Gastrocnemius medialis (tissue), 4 donors: ENCODE measurements at regions of chr3 and their contacts with region 1.

Region 1: GRCh38 chr3:54374214-54374855 is 252.0 kb downstream of the CACNA2D3 start:
- DNase-seq: no peak
- ATAC-seq: peak in 1 of 2 donors; percentile 41
- H3K4me3 ChIP-seq: no peak overlapping the region
- H3K27ac ChIP-seq: no peak overlapping the region
- H3K4me1 ChIP-seq: peaks cover 0 to 4% of the 10 kb centered on the region in 2 donors
- H3K27me3 ChIP-seq: no peaks in the 10 kb centered on the region
- CTCF ChIP-seq: peak; percentile 26 to 50 (median 39)
- POLR2A ChIP-seq: no peak

Region 2: DNA sequence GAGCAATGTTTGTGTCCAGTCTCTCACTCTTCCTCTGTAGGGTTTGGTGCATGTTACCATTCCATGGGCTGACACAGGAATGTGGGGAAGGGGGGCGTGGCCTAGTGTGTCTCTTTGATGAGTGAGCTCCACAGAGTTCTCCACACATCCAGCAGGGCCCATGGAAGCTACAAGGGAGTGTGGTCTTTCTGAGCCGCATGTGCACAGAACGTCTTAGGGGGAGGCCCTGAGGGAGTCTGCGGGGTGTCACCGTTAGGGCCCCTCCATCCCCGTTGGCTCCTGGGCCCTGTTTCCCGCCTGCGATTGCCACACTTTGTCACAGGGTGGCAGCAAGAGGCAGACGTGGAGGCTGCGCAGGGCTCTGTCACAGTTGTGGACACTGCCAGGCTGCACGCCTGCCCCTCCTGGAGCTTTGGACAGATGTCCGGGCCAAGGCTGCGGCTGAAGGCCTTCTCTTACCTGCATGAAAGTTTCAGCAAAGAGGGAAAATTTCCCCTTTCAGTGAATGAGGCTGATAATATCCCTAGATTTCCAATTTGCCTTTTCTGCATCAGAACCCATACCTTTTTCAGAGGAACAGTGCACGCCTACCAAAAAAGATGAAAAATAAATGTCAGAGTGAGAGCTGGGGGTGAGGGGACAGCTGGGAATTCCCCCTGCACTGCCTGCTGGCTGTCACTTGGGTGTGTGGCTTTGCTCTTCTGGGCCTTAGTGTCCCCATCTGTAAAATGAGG is 227.7 kb before region 1 on chr3:
- in situ Hi-C with region 1: loop called in 1 of 4 experiments (anchors 10 kb)
- intact Hi-C with region 1: loop called (anchors 1 kb)
- DNase-seq: peak; percentile 48 to 59
- ATAC-seq: peak; percentile 81 to 91
- H3K4me3 ChIP-seq: no peak overlapping the region
- H3K27ac ChIP-seq: no peak overlapping the region
- H3K4me1 ChIP-seq: peaks cover 4 to 11% of the 10 kb centered on the region in 2 donors
- H3K27me3 ChIP-seq: no peaks in the 10 kb centered on the region
- CTCF ChIP-seq: peak; percentile 44 to 73 (median 57)
- POLR2A ChIP-seq: no peak